CD4-positive, alpha-beta T cell (primary cell): ENCODE measurements at regions of chr12 and their contacts with region 1.

Region 1: DNA sequence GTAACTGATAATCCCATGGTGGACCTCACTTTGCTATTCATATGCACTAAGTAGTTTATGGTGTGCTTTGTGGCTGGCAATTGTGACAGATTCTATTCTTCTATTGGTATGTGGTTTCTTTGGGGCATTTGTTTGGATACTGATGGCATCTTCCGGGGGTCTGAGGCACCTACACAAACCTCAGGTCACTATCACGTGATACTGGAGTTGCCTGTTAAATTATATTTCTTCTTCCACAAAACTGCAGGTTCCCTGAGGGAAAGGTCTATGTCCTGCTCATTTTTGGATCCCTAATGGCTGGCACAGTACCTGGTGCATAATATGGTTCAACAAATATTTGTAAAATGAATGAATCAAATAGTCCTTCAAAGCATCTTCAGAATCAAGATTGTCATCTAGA is 49.5 kb upstream of the HELB start:
- DNase-seq: no peak
- ATAC-seq: no peak
- H3K4me3 ChIP-seq: no peak overlapping the region
- H3K4me3 Mint-ChIP-seq: no peak overlapping the region
- H3K27ac ChIP-seq: no peak overlapping the region
- H3K27ac Mint-ChIP-seq: no peak overlapping the region
- H3K4me1 ChIP-seq: no peaks in the 10 kb centered on the region
- H3K4me1 Mint-ChIP-seq: no peaks in the 10 kb centered on the region
- H3K27me3 ChIP-seq: no peaks in the 10 kb centered on the region
- H3K27me3 Mint-ChIP-seq: peaks cover 4% of the 10 kb centered on the region
- CTCF ChIP-seq: no peak

Region 2: GRCh38 chr12:66210840-66211239 is 41.9 kb before region 1 on chr12:
- CTCF ChIA-PET with region 1: no interaction called
- POLR2A ChIA-PET with region 1: no interaction called
- intact Hi-C with region 1: loop called in 1 of 2 experiments (anchors 1 kb)
- DNase-seq: no peak
- ATAC-seq: no peak
- H3K4me3 ChIP-seq: no peak overlapping the region
- H3K4me3 Mint-ChIP-seq: no peak overlapping the region
- H3K27ac ChIP-seq: no peak overlapping the region
- H3K27ac Mint-ChIP-seq: no peak overlapping the region
- H3K4me1 ChIP-seq: no peaks in the 10 kb centered on the region
- H3K4me1 Mint-ChIP-seq: peaks cover 8% of the 10 kb centered on the region
- H3K27me3 ChIP-seq: peaks cover 0 to 10% of the 10 kb centered on the region in 2 experiments
- H3K27me3 Mint-ChIP-seq: peaks cover 20% of the 10 kb centered on the region
- CTCF ChIP-seq: no peak